ENCODE measurements at regions of chr10 and their contacts with region 1.

Region 1: GRCh38 chr10:10270126-10271050 is 747.3 kb upstream of the CELF2 start:
- DNase-seq: peak in 2 of 5 donors; percentile 5 to 34
- H3K4me3 ChIP-seq: no peak overlapping the region
- H3K27ac ChIP-seq: no peak overlapping the region
- H3K4me1 ChIP-seq: no peaks in the 10 kb centered on the region
- H3K27me3 ChIP-seq: no peaks in the 10 kb centered on the region
- CTCF ChIP-seq: no peak

Region 2: DNA sequence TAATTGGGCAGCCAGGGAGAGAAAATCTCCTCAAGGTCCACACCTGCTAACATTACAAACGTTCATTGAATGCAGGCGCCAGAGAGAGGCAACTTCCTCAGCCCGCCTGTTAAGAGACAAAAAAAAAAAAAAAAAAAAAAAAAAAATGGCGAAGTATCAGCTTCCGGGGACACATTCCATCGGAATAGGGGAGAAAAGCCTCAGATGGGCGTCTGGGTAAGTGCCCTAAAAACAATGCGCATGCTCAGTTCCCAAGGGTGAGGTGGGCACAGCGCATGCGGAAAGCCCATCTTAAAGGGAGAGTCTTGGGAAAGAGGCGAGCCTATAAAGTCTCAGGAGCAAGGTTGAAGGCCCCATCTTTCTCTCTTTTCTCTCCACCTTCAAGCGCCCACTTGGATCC is 392.4 kb before region 1 on chr10:
- intact Hi-C with region 1: no loop called
- DNase-seq: no peak
- H3K4me3 ChIP-seq: no peak overlapping the region
- H3K27ac ChIP-seq: no peak overlapping the region
- H3K4me1 ChIP-seq: no peaks in the 10 kb centered on the region
- H3K27me3 ChIP-seq: no peaks in the 10 kb centered on the region
- CTCF ChIP-seq: no peak

Region 3: GRCh38 chr10:10118131-10118530 is 152.3 kb before region 1 on chr10:
- intact Hi-C with region 1: loop called (anchors 5 kb)
- DNase-seq: no peak
- H3K4me3 ChIP-seq: no peak overlapping the region
- H3K27ac ChIP-seq: no peak overlapping the region
- H3K4me1 ChIP-seq: no peaks in the 10 kb centered on the region
- H3K27me3 ChIP-seq: no peaks in the 10 kb centered on the region
- CTCF ChIP-seq: no peak

Region 4: GRCh38 chr10:10330418-10330817 is 60.0 kb after region 1 on chr10:
- intact Hi-C with region 1: no loop called
- DNase-seq: peak in 1 of 5 donors; percentile 27
- H3K4me3 ChIP-seq: no peak overlapping the region
- H3K27ac ChIP-seq: no peak overlapping the region
- H3K4me1 ChIP-seq: no peaks in the 10 kb centered on the region
- H3K27me3 ChIP-seq: no peaks in the 10 kb centered on the region
- CTCF ChIP-seq: no peak

Region 5: DNA sequence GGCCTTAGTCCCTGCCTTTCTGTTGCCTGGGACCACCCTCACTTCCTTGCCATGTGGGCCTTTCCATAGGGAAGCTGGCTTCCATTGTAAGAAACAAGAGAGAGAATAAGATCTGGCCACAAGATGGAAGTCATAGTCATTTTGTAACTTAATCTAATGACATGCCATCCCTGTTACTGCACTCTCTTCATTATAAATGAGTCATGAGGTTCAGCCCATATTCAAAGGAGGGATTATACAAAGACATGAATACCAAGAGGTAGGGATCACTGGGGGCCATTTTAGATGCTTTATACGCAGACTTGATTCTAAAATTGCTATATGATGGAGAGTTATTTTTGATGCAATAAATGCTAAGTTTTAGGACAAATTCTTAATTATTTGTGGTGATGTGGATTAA is 672.1 kb after region 1 on chr10:
- intact Hi-C with region 1: no loop called
- DNase-seq: no peak
- H3K4me3 ChIP-seq: no peak overlapping the region
- H3K27ac ChIP-seq: no peak overlapping the region
- H3K4me1 ChIP-seq: no peaks in the 10 kb centered on the region
- H3K27me3 ChIP-seq: no peaks in the 10 kb centered on the region
- CTCF ChIP-seq: no peak